T-cell (primary cell): ENCODE measurements at regions of chr17 and their contacts with region 1.

Region 1: DNA sequence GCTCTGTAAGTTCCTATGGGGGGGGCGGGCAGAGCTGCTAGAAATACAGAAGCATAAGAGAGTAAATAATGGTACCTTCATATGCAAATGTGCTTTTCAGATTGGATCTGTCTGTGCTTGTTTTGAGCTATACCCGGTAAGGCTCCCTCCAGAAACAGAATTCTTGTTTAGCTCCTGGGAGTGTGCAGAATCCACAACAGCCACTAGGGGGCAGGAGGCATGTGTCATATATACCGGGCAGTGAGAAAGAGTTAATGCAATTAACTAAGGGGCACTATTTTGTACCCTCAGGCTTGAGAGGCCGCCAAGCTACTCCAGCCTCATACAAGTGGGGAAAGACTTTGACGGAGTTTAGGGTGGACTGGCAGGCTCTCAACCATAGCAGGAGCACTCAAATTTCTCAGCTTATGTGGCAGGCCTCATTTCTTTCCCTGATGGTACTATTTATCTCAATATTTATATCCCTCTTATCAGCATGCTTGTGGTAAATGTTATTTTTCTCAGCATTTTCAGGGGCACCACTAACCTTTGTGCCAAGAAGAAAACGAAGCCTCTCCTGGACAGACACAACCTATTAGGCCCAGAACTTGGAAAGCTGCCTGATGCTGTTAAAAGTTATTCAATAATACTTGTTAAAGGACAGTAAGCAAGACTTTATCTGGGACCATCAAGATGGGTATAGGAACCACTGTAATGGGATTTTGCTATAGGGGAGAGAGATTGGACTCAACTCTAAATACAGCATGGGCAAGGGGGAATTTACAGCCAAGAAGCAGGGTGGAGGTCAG is 10.7 kb upstream of the CENPV start:
- DNase-seq: peak; percentile 14 to 85 (median 62)
- ATAC-seq: peak; percentile 77 to 92 (median 90)
- H3K4me3 ChIP-seq: no peak overlapping the region
- H3K4me3 Mint-ChIP-seq: no peak overlapping the region
- H3K27ac ChIP-seq: no peak overlapping the region
- H3K27ac Mint-ChIP-seq: no peak overlapping the region
- H3K4me1 ChIP-seq: no peaks in the 10 kb centered on the region
- H3K4me1 Mint-ChIP-seq: peaks cover 0 to 3% (median 2%) of the 10 kb centered on the region in 3 donors
- H3K27me3 ChIP-seq: peaks cover 0 to 10% of the 10 kb centered on the region in 2 experiments
- H3K27me3 Mint-ChIP-seq: no peaks in the 10 kb centered on the region

Region 2: GRCh38 chr17:16353317-16354174 is 10.4 kb before region 1 on chr17 and contains the start of gene CENPV:
- CTCF ChIA-PET with region 1: interaction called, 5 to 17 read pairs
- POLR2A ChIA-PET with region 1: no interaction called
- DNase-seq: peak; percentile 21 to 84 (median 57)
- ATAC-seq: peak; percentile 84 to 92 (median 86)
- H3K4me3 ChIP-seq: peak within 1 kb of the TSS; percentile 63 to 80
- H3K4me3 Mint-ChIP-seq: peak within 1 kb of the TSS; percentile 89 to 91 (median 89)
- H3K27ac ChIP-seq: no peak within 1 kb of the TSS
- H3K27ac Mint-ChIP-seq: peak within 1 kb of the TSS; percentile 49 to 79
- H3K4me1 ChIP-seq: peaks cover 5 to 21% of the 10 kb centered on the region in 2 experiments
- H3K4me1 Mint-ChIP-seq: peaks cover 15 to 22% (median 19%) of the 10 kb centered on the region in 3 donors
- H3K27me3 ChIP-seq: peaks cover 0 to 6% of the 10 kb centered on the region in 2 experiments
- H3K27me3 Mint-ChIP-seq: no peaks in the 10 kb centered on the region
- total RNA-seq, gene CENPV: 12.7 to 20.0 (median 17.8) TPM

Region 3: DNA sequence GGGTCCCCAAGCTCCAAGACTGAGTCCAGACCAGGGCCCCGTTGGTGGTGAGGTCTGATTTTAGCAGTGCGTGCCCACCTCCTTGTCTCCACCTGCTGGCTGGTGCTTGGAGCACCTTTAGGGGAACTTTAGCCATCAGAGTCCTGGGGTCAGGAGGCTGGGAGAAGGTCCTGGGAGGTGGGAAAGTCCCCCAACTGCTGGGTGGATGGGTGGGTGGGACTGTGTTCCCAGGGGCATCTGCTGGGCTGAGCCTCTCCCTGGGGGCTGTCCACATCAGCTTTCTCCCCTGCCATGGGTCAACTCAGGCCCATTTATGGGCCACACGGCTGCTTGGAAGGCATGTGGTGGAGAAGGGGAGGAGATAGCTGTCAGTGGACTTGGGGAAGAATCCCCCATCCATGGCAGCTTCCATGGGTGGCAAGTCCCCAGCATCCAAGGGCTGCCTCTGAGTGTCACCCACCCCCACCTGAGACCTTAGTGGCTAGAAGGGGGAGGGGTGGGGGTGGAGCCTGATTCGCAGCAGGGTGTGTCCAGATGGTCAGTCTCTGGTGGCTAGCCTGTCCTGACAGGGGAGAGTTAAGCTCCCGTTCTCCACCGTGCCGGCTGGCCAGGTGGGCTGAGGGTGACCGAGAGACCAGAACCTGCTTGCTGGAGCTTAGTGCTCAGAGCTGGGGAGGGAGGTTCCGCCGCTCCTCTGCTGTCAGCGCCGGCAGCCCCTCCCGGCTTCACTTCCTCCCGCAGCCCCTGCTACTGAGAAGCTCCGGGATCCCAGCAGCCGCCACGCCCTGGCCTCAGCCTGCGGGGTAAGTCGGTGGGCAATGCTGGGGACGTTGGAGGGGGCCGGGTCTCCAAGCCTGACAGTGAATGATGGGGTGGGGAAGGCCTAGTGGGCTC is 51.3 kb after region 1 on chr17 and contains the start of gene TRPV2:
- CTCF ChIA-PET with region 1: interaction called, 5 to 24 read pairs
- POLR2A ChIA-PET with region 1: interaction called in 1 of 2 experiments, 3 read pairs
- DNase-seq: peak in 34 of 35 experiments; percentile 24 to 69 (median 42)
- ATAC-seq: peak; percentile 48 to 75 (median 68)
- H3K4me3 ChIP-seq: peak within 1 kb of the TSS; percentile 86 to 92
- H3K4me3 Mint-ChIP-seq: peak within 1 kb of the TSS; percentile 90 to 98 (median 95)
- H3K27ac ChIP-seq: peak within 1 kb of the TSS; percentile 88
- H3K27ac Mint-ChIP-seq: peak within 1 kb of the TSS; percentile 99
- H3K4me1 ChIP-seq: peaks cover 8 to 60% of the 10 kb centered on the region in 2 experiments
- H3K4me1 Mint-ChIP-seq: peaks cover 45 to 52% (median 50%) of the 10 kb centered on the region in 3 donors
- H3K27me3 ChIP-seq: no peaks in the 10 kb centered on the region
- H3K27me3 Mint-ChIP-seq: no peaks in the 10 kb centered on the region
- total RNA-seq, gene TRPV2: 91.3 to 127 (median 122) TPM

Region 4: GRCh38 chr17:16521070-16521727 is 157.3 kb after region 1 on chr17:
- CTCF ChIA-PET with region 1: interaction called, 6 to 30 read pairs
- POLR2A ChIA-PET with region 1: no interaction called
- DNase-seq: peak; percentile 12 to 84 (median 46)
- ATAC-seq: peak; percentile 84 to 96 (median 90)
- H3K4me3 ChIP-seq: no peak overlapping the region
- H3K4me3 Mint-ChIP-seq: no peak overlapping the region
- H3K27ac ChIP-seq: no peak overlapping the region
- H3K27ac Mint-ChIP-seq: no peak overlapping the region
- H3K4me1 ChIP-seq: peaks cover 0 to 6% of the 10 kb centered on the region in 2 experiments
- H3K4me1 Mint-ChIP-seq: peaks cover 2 to 6% (median 3%) of the 10 kb centered on the region in 3 donors
- H3K27me3 ChIP-seq: peaks cover 0 to 37% of the 10 kb centered on the region in 2 experiments
- H3K27me3 Mint-ChIP-seq: peaks cover 20 to 34% of the 10 kb centered on the region in 2 donors